Mammary epithelial cell (primary cell): ENCODE measurements at regions of chrX and their contacts with region 1.

Region 1: DNA sequence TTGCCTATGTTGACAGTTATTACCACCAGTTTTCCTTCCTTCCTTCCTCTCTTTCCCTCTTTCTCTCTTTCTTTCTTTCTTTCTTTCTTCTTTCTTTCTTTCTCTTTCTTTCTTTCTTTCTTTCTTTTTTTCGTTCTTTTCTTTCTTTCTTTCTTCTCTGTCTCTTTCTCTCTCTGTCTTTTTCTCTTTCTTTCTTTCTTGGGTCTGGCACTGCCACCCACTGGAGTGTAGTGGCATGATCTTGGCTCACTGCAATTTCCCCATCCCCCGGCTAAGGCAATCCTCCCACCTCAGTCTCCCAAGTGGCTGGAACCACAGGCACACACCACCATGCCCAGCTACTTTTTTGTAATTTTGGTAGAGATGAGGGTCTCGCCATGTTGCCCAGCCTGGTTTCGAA is 51.6 kb upstream of the NHS start:
- DNase-seq: no peak
- H3K4me3 ChIP-seq: no peak overlapping the region
- H3K27ac ChIP-seq: no peak overlapping the region
- H3K4me1 ChIP-seq: no peaks in the 10 kb centered on the region
- H3K27me3 ChIP-seq: peaks cover 5% of the 10 kb centered on the region
- CTCF ChIP-seq: no peak

Region 2: GRCh38 chrX:15559227-15559626 is 1764.1 kb before region 1 on chrX:
- CTCF ChIA-PET with region 1: no interaction called
- dilution Hi-C with region 1: no loop called
- in situ Hi-C with region 1: no loop called
- intact Hi-C with region 1: no loop called
- DNase-seq: no peak
- H3K4me3 ChIP-seq: no peak overlapping the region
- H3K27ac ChIP-seq: no peak overlapping the region
- H3K4me1 ChIP-seq: no peaks in the 10 kb centered on the region
- H3K27me3 ChIP-seq: no peaks in the 10 kb centered on the region
- CTCF ChIP-seq: no peak

Region 3: GRCh38 chrX:17226736-17227135 is 96.6 kb before region 1 on chrX:
- CTCF ChIA-PET with region 1: no interaction called
- dilution Hi-C with region 1: no loop called
- in situ Hi-C with region 1: no loop called
- intact Hi-C with region 1: no loop called
- DNase-seq: no peak
- H3K4me3 ChIP-seq: no peak overlapping the region
- H3K27ac ChIP-seq: no peak overlapping the region
- H3K4me1 ChIP-seq: no peaks in the 10 kb centered on the region
- H3K27me3 ChIP-seq: peaks cover 3% of the 10 kb centered on the region
- CTCF ChIP-seq: no peak

Region 4: DNA sequence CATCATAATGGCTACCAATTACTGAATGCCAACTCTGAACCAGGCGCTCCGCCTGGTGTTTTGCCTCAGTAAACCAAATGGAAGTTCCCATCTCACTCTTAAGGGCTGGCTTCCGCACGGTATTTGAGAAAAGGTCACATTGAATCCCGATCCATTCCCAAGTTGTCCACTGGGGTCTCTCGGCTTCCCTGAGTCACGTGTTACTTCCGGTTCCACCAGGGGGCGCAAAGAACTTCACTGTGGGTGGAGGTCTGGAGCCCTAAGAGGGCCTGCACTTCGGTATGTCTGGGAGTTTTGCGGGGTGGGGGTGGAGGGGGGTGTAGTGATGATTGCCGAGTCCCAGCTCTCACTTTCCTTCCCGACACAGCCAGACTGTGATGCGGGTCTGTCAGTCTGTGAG is 38.2 kb after region 1 on chrX:
- CTCF ChIA-PET with region 1: no interaction called
- dilution Hi-C with region 1: no loop called
- in situ Hi-C with region 1: loop called in 1 of 2 experiments (anchors 10 kb)
- intact Hi-C with region 1: no loop called
- DNase-seq: no peak
- H3K4me3 ChIP-seq: no peak overlapping the region
- H3K27ac ChIP-seq: no peak overlapping the region
- H3K4me1 ChIP-seq: peaks cover 5% of the 10 kb centered on the region
- H3K27me3 ChIP-seq: no peaks in the 10 kb centered on the region
- CTCF ChIP-seq: peak; percentile 9 to 23